ENCODE measurements at regions of chr1 and their contacts with region 1.

Region 1: DNA sequence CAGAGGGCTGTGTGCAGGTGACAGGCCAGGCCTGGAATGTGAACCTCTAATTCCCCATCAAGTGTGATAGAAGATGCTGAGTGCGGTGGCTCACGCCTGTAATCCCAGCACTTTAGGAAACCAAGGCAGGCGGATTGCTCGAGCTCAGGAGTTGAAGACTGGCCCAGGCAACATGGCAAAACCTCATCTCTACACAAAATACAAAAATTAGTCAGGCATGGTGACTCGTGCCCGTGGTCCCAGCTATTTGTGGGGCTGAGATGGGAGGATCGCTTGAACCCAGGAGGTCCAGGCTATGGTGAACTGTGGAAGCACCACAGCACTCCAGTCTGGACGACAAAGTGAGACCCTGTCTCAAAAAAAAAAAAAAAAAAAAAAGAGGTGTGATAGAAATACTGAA is 40.1 kb upstream of the PUM1 start:
- DNase-seq: no peak
- ATAC-seq: no peak
- H3K4me3 ChIP-seq: no peak overlapping the region
- H3K27ac ChIP-seq: no peak overlapping the region
- H3K4me1 ChIP-seq: no peaks in the 10 kb centered on the region; the same call in 1 of the 2 replicates
- H3K27me3 ChIP-seq: no peaks in the 10 kb centered on the region
- CTCF ChIP-seq: no peak

Region 2: GRCh38 chr1:30727824-30728223 is 377.8 kb before region 1 on chr1:
- CTCF ChIA-PET with region 1: no interaction called
- POLR2A ChIA-PET with region 1: interaction called, 14 read pairs
- in situ Hi-C with region 1: no loop called
- intact Hi-C with region 1: no loop called
- DNase-seq: no peak
- ATAC-seq: no peak
- H3K4me3 ChIP-seq: no peak overlapping the region
- H3K27ac ChIP-seq: no peak overlapping the region
- H3K4me1 ChIP-seq: no peaks in the 10 kb centered on the region; the same call in 1 of the 2 replicates
- H3K27me3 ChIP-seq: no peaks in the 10 kb centered on the region
- CTCF ChIP-seq: no peak

Region 3: GRCh38 chr1:31154075-31154631 is 48.5 kb after region 1 on chr1:
- CTCF ChIA-PET with region 1: no interaction called
- POLR2A ChIA-PET with region 1: interaction called, 12 read pairs
- in situ Hi-C with region 1: no loop called
- intact Hi-C with region 1: no loop called
- DNase-seq: no peak
- ATAC-seq: no peak
- H3K4me3 ChIP-seq: peak overlapping the region; percentile 57 to 73
- H3K27ac ChIP-seq: peak overlapping the region; percentile 98
- H3K4me1 ChIP-seq: peaks cover 8% of the 10 kb centered on the region
- H3K27me3 ChIP-seq: no peaks in the 10 kb centered on the region
- CTCF ChIP-seq: no peak

Region 4: DNA sequence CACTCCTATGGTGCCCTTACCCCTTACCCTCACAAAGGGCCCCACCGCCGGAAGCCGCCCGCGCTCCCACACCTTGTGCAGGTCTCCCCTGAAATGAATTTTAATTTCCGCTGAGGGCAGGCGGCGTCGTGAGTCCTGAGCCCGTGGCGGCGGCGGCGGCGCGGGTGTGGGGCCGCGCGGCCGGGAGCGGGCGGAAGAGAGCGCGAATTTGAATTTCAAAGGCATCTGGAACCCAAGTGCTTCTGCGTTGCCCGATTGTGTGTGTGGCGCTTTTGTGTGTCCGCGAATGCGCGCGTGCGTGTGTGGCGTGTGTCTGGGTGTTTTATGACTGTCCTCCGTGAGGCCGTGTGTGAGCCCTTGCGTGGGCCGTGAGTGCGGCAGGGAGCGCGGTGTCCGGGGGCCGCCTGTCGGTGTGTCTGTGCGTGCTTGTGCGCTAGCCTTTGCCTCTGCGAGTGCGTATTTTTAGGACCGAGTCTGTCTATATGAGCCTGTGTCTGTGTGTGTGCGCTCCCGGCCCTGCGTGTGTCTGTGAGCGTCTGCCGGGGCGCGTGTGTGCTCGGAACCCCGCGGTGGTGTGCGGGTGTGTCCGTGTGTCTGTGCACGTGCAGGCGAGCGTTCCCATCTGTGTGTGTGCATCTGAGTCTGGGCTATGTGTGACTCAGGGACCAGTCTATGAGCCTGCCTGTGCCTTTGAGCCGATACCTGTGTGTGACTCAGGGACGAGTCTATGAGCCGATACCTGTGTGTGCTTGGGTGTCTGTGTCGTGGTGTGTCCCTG is 666.4 kb after region 1 on chr1:
- CTCF ChIA-PET with region 1: no interaction called
- POLR2A ChIA-PET with region 1: no interaction called
- in situ Hi-C with region 1: no loop called
- intact Hi-C with region 1: no loop called
- DNase-seq: no peak
- ATAC-seq: no peak
- H3K4me3 ChIP-seq: no peak overlapping the region
- H3K27ac ChIP-seq: no peak overlapping the region
- H3K4me1 ChIP-seq: peaks cover 32% of the 10 kb centered on the region
- H3K27me3 ChIP-seq: peaks cover 2% of the 10 kb centered on the region; the same call in 1 of the 2 replicates
- CTCF ChIP-seq: no peak